ENCODE measurements at regions of chr7 and their contacts with region 1.

Region 1: GRCh38 chr7:16492513-16493062 is 27.1 kb upstream of the SOSTDC1 start:
- DNase-seq: peak; percentile 46
- ATAC-seq: peak; percentile 72
- H3K4me3 ChIP-seq: no peak overlapping the region
- H3K27ac ChIP-seq: peak overlapping the region; percentile 5; the same call in 1 of the 2 replicates
- H3K4me1 ChIP-seq: peaks cover 21% of the 10 kb centered on the region
- H3K27me3 ChIP-seq: no peaks in the 10 kb centered on the region
- CTCF ChIP-seq: no peak

Region 2: DNA sequence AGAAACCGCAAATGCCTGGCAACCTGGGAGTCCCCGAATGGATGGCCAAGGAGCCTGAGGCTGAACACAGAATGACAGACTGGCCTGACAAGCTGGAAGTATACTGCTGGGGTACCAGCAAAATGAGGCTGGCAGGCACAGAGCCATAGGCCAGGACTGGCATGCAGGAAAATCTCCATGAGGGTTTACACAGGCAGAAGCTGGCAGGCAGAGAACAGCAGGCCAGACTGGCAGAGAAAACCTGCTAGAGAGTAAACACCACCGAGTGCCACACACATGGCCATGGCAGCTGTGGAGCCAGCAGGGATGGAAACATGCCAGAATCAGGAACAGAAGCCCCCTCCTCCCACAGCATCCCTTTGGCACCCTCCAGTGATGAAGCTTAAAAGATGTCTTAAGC is 134.7 kb before region 1 on chr7:
- CTCF ChIA-PET with region 1: no interaction called
- POLR2A ChIA-PET with region 1: interaction called, 3 read pairs
- intact Hi-C with region 1: loop called (anchors 10 kb)
- DNase-seq: no peak
- ATAC-seq: no peak
- H3K4me3 ChIP-seq: no peak overlapping the region
- H3K27ac ChIP-seq: no peak overlapping the region
- H3K4me1 ChIP-seq: peaks cover 11% of the 10 kb centered on the region
- H3K27me3 ChIP-seq: no peaks in the 10 kb centered on the region
- CTCF ChIP-seq: no peak

Region 3: DNA sequence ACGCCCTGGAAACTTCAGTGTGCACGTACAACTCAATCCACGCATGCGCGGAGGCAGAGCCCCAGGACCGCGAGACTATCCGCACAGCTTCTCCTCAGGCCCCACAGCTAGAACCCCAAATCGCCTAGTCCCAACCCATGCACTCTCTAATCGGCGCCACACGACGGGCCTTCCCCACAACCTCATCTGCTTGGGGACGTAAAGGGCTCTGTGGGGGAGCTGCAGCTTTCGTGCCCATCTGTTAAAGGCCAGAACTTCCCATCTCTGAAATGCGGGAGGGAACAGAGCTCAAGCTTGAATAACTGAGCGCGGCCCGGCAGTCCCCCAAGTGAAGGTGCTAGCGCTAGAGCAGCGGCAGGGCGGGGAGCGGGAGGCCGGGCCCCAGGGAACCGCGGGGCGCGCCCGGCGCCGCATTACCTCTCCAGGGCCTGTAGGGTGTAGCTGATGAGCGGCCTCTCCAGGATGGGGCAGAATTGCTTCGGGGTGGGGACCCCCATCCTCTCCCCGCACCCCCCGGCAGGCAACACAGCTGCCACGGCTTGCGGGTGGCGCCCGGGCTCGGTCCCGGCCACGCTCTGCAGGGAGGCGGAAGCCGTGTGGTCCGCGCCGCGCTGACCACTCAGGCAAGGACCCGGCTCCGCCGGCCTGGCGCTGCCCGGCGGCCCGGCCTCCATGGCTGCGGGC is 71.8 kb before region 1 on chr7:
- CTCF ChIA-PET with region 1: no interaction called
- POLR2A ChIA-PET with region 1: no interaction called
- intact Hi-C with region 1: no loop called
- DNase-seq: peak; percentile 71
- ATAC-seq: peak; percentile 78
- H3K4me3 ChIP-seq: peak overlapping the region; percentile 71
- H3K27ac ChIP-seq: peak overlapping the region; percentile 83
- H3K4me1 ChIP-seq: peaks cover 43% of the 10 kb centered on the region
- H3K27me3 ChIP-seq: no peaks in the 10 kb centered on the region
- CTCF ChIP-seq: peak; percentile 38; the same call in 1 of the 2 replicates

Region 4: DNA sequence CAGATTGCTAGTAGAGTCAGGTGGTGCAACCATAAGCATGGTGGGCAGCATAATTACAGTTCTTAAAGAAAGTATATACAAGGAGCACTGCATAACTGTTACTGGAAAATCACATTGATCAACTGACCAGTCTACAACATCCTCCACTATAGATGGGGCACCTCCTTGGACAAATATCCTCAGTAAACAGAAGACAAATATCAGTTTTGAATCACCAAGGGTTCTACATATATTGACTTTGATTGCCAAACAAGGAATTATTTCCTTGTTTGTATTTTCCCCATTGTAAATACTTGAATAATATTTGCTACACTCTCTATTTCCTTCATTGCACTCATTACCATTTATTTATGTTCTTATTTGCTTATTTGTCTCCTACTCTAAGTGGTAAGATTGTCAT is 53.6 kb before region 1 on chr7:
- CTCF ChIA-PET with region 1: no interaction called
- POLR2A ChIA-PET with region 1: no interaction called
- intact Hi-C with region 1: loop called (anchors 2 kb)
- DNase-seq: no peak
- ATAC-seq: peak; percentile 55
- H3K4me3 ChIP-seq: no peak overlapping the region
- H3K27ac ChIP-seq: no peak overlapping the region
- H3K4me1 ChIP-seq: no peaks in the 10 kb centered on the region
- H3K27me3 ChIP-seq: no peaks in the 10 kb centered on the region
- CTCF ChIP-seq: no peak

Region 5: GRCh38 chr7:16515785-16516685 is 23.4 kb after region 1 on chr7:
- CTCF ChIA-PET with region 1: no interaction called
- POLR2A ChIA-PET with region 1: no interaction called
- intact Hi-C with region 1: loop called (anchors 1 kb)
- DNase-seq: no peak
- ATAC-seq: no peak
- H3K4me3 ChIP-seq: no peak overlapping the region
- H3K27ac ChIP-seq: no peak overlapping the region
- H3K4me1 ChIP-seq: no peaks in the 10 kb centered on the region
- H3K27me3 ChIP-seq: no peaks in the 10 kb centered on the region
- CTCF ChIP-seq: no peak

Region 6: GRCh38 chr7:16546921-16547505 is 54.4 kb after region 1 on chr7:
- CTCF ChIA-PET with region 1: no interaction called
- POLR2A ChIA-PET with region 1: no interaction called
- intact Hi-C with region 1: no loop called
- DNase-seq: no peak
- ATAC-seq: no peak
- H3K4me3 ChIP-seq: no peak overlapping the region
- H3K27ac ChIP-seq: no peak overlapping the region
- H3K4me1 ChIP-seq: no peaks in the 10 kb centered on the region
- H3K27me3 ChIP-seq: no peaks in the 10 kb centered on the region
- CTCF ChIP-seq: no peak